Activated naive CD4-positive, alpha-beta T cell treated with anti-CD3 and anti-CD28 coated beads for 36 hours (primary cell): ENCODE measurements at regions of chr12 and their contacts with region 1.

Region 1: GRCh38 chr12:45122768-45123380 is 72.0 kb upstream of the DBX2 start:
- DNase-seq: no peak
- H3K4me3 Mint-ChIP-seq: no peak overlapping the region
- H3K27ac Mint-ChIP-seq: no peak overlapping the region
- H3K4me1 Mint-ChIP-seq: no peaks in the 10 kb centered on the region
- H3K27me3 Mint-ChIP-seq: peaks cover 3% of the 10 kb centered on the region

Region 2: DNA sequence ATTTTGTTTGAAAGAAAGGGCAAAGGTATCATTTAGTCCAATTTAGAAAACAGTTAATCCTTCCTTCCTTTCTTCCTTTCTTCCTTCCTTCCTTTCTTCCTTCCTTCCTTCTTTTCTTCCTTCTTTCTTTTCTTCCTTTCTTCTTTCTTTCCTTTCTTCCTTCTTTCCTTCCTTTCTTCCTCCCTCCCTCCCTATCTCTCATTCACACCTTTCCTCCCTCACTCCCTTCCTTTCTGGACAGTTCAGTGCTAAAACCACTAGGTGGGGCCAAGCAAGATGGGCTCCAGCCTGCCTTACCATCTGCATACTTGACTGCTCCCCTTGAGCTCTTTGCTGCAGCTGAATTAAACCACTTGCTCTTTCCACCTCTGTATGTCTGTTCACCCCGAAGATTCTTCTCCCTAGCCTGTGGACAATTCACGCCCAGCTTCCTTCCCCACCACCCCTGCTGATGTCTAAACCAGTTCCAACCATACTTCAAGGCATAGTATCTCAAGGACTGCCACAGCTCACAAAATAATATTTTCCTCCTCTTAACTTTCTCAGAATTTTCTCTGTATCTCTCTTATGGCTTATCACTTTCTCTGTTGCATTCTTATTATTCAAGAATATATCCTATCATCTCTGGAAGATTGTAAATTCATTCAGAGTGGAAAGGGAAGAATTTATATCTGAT is 150.0 kb before region 1 on chr12:
- CTCF ChIA-PET with region 1: interaction called, 3 read pairs
- intact Hi-C with region 1: loop called (anchors 5 kb)
- DNase-seq: no peak
- H3K4me3 Mint-ChIP-seq: no peak overlapping the region
- H3K27ac Mint-ChIP-seq: no peak overlapping the region
- H3K4me1 Mint-ChIP-seq: peaks cover 5% of the 10 kb centered on the region
- H3K27me3 Mint-ChIP-seq: no peaks in the 10 kb centered on the region